ENCODE measurements at regions of chr10 and their contacts with region 1.

Region 1: GRCh38 chr10:96556003-96556402 is 30.8 kb downstream of the TM9SF3 start:
- DNase-seq: no peak
- ATAC-seq: peak; percentile 60
- H3K4me3 ChIP-seq: no peak overlapping the region
- H3K27ac ChIP-seq: no peak overlapping the region
- H3K4me1 ChIP-seq: no peaks in the 10 kb centered on the region
- H3K27me3 ChIP-seq: no peaks in the 10 kb centered on the region
- CTCF ChIP-seq: peak; percentile 40 to 56 (median 41); a peak in 5 of 6 replicates
- POLR2A ChIP-seq: no peak
- RAD21 ChIP-seq: peak; percentile 47

Region 2: DNA sequence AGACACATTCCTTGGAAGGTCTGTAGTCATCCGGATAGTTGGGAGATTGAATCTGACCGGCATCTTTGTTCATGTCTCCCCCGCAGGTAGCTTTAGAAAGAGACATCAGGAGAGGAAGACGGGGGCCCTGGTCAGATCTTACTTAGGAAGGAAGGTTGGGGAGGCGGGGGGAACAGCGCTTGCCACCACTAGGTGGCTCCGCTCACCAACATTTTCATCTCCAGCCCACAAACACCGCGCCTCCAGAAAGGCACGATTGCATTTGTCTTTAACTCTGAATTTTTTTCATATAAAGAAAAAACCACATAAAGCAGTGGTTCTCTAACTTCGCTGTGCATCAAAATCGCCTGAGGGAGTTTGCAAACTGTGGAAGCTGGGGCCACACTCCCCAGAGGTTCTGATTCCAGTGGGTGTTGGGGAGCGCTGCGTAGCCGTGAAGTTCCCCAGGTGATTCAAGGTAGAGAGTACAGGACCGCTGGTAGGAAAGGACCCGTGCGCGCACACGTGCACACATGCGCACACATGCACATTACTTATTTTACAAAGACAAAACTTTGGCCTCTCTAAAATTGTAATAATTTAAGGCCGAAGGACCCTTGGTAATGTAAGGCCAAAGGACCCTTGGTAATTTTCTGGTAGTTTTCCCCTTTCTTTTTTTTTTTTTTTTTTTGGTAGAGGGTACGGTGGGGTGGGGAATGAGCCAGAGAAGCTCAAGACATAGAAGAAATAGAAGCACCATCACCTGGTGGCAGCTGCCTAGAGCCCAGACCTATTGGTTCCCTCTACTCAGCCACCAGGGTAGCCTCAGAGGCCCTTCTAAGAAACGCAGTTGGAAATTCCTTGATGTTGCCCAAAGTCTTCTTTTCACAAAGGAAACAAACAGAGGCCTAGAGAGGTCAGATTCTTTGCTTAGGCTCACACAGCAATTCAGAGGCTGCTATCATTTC is 159.8 kb before region 1 on chr10:
- CTCF ChIA-PET with region 1: interaction called, 3 read pairs
- POLR2A ChIA-PET with region 1: no interaction called
- RAD21 ChIA-PET with region 1: no interaction called
- intact Hi-C with region 1: loop called (anchors 2 kb)
- DNase-seq: peak; percentile 21
- ATAC-seq: peak; percentile 96
- H3K4me3 ChIP-seq: no peak overlapping the region
- H3K27ac ChIP-seq: no peak overlapping the region
- H3K4me1 ChIP-seq: no peaks in the 10 kb centered on the region
- H3K27me3 ChIP-seq: peaks cover 26% of the 10 kb centered on the region
- CTCF ChIP-seq: peak; percentile 79 to 96 (median 93)
- POLR2A ChIP-seq: no peak
- RAD21 ChIP-seq: peak; percentile 86

Region 3: DNA sequence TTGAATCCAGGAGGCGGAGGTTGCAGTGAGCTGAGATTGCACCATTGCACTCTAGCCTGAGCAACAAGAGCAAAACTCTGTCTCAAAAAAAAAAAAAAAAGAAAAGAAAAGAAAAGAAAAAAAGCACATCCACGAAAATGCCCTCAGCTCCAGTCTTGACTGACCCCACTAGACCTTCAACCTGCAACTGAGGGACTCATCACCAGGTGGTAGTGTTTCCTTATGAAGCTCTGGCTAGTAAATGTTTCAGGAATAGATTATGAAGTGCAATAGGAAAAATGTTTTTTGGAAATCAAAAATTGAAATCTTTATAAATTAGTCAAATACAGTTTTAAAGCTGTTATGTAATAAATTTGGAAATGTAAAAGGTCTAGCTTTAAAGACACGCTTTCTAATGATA is 64.7 kb before region 1 on chr10:
- CTCF ChIA-PET with region 1: interaction called, 5 read pairs
- POLR2A ChIA-PET with region 1: no interaction called
- RAD21 ChIA-PET with region 1: no interaction called
- intact Hi-C with region 1: loop called (anchors 1 kb)
- DNase-seq: no peak
- ATAC-seq: no peak
- H3K4me3 ChIP-seq: no peak overlapping the region
- H3K27ac ChIP-seq: no peak overlapping the region
- H3K4me1 ChIP-seq: peaks cover 0 to 10% of the 10 kb centered on the region in 2 experiments; a peak in 2 of 4 replicates
- H3K27me3 ChIP-seq: no peaks in the 10 kb centered on the region
- CTCF ChIP-seq: peak; percentile 45 to 75 (median 52)
- POLR2A ChIP-seq: no peak
- RAD21 ChIP-seq: peak; percentile 78